ENCODE measurements at regions of chrX and their contacts with region 1.

Region 1: DNA sequence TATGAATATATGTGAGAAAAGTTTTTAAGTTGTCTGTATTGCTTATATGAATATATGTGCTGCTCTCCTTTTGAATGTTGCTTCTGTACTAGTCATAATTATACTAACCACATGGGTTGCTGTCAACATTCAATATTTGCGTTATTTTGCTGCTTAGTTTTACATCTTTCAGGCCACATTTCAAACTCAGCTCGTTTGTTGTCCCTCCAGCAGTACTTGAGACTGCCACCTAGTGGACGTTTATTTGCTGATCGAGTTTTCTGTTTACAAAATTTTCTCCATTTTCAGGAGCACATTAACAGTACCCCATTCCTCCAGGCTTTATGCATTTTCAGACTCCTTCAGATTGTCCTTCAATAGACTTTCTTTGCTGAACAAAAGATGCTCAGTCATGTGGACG is 75.8 kb downstream of the NUDT11 start:
- DNase-seq: peak; percentile 64
- H3K4me3 ChIP-seq: no peak overlapping the region
- H3K27ac ChIP-seq: no peak overlapping the region
- H3K4me1 ChIP-seq: no peaks in the 10 kb centered on the region
- H3K27me3 ChIP-seq: peaks cover 8% of the 10 kb centered on the region
- CTCF ChIP-seq: peak; percentile 79

Region 2: GRCh38 chrX:51024077-51024696 is 396.4 kb before region 1 on chrX:
- CTCF ChIA-PET with region 1: no interaction called
- POLR2A ChIA-PET with region 1: no interaction called
- intact Hi-C with region 1: no loop called
- DNase-seq: no peak
- H3K4me3 ChIP-seq: no peak overlapping the region
- H3K27ac ChIP-seq: no peak overlapping the region
- H3K4me1 ChIP-seq: no peaks in the 10 kb centered on the region
- H3K27me3 ChIP-seq: no peaks in the 10 kb centered on the region
- CTCF ChIP-seq: no peak

Region 3: GRCh38 chrX:51144852-51145442 is 275.7 kb before region 1 on chrX:
- CTCF ChIA-PET with region 1: interaction called, 8 read pairs
- POLR2A ChIA-PET with region 1: no interaction called
- intact Hi-C with region 1: loop called (anchors 5 kb)
- DNase-seq: peak; percentile 73
- H3K4me3 ChIP-seq: no peak overlapping the region
- H3K27ac ChIP-seq: no peak overlapping the region
- H3K4me1 ChIP-seq: no peaks in the 10 kb centered on the region
- H3K27me3 ChIP-seq: peaks cover 5% of the 10 kb centered on the region
- CTCF ChIP-seq: peak; percentile 83

Region 4: DNA sequence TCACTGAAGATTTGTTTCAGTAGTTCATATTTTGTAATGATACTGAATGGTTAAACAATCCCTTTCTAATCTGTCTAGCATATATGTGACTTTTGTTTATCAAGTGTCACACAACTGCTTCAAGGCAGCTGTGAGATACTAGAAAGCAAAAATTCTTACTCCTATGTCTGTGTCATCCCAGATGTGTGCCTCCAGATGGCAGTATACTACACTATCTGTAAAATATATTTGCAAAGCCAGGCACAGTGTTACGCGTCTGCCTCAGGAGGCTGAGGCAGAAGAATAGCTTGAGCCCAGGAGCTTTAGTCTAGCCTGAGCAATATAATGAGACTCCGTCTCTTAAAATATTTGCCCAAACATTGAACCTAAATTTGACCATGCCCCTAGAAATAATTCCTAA is 84.0 kb before region 1 on chrX:
- CTCF ChIA-PET with region 1: interaction called, 17 read pairs
- POLR2A ChIA-PET with region 1: no interaction called
- intact Hi-C with region 1: loop called (anchors 1 kb)
- DNase-seq: peak; percentile 67
- H3K4me3 ChIP-seq: no peak overlapping the region
- H3K27ac ChIP-seq: no peak overlapping the region
- H3K4me1 ChIP-seq: no peaks in the 10 kb centered on the region
- H3K27me3 ChIP-seq: no peaks in the 10 kb centered on the region
- CTCF ChIP-seq: peak; percentile 63

Region 5: DNA sequence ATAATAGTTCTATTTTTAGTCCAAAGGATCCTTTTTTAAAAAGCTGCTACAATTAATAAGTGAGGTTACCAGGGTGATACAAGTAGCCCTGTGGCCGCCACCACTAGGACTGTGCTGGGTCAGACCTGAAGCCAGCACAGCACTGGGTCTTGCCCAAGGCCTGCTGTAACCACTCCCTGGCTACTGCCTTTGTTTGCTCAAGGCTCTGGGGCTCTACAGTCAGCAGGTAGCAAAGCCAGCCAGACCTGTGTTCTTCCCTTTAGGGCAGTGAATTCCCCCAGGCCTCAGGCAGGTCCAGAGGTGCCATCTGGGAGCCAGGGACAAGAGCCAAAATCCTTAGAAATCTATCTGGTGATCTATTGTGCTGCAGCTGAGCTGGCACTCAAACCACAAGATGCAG is 25.3 kb after region 1 on chrX:
- CTCF ChIA-PET with region 1: no interaction called
- POLR2A ChIA-PET with region 1: no interaction called
- intact Hi-C with region 1: no loop called
- DNase-seq: no peak
- H3K4me3 ChIP-seq: no peak overlapping the region
- H3K27ac ChIP-seq: no peak overlapping the region
- H3K4me1 ChIP-seq: no peaks in the 10 kb centered on the region
- H3K27me3 ChIP-seq: no peaks in the 10 kb centered on the region
- CTCF ChIP-seq: no peak